Panc1 (cell line): ENCODE measurements at regions of chr7 and their contacts with region 1.

Region 1: DNA sequence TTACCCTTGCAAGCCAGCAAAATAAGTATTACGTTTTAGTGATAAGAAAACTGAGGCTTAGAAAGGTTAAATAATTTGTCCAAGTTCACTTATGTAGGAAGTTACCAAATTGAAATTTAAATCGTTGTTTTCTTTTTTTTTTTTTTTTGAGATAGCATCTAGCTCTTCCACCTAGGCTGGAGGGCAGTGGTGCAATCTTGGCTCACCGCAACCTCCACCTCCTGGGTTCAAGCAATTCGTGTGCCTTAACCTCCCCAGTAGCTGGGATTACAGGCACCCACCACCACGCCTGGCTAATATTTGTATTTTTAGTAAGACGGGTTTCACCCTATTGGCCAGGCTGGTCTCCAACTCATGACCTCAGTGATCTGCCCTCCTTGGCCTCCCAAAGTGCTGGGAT is 158.9 kb upstream of the MKLN1 start:
- DNase-seq: no peak
- ATAC-seq: no peak
- H3K4me3 ChIP-seq: no peak overlapping the region
- H3K27ac ChIP-seq: no peak overlapping the region
- H3K4me1 ChIP-seq: peaks cover 24% of the 10 kb centered on the region
- H3K27me3 ChIP-seq: no peaks in the 10 kb centered on the region
- CTCF ChIP-seq: no peak

Region 2: DNA sequence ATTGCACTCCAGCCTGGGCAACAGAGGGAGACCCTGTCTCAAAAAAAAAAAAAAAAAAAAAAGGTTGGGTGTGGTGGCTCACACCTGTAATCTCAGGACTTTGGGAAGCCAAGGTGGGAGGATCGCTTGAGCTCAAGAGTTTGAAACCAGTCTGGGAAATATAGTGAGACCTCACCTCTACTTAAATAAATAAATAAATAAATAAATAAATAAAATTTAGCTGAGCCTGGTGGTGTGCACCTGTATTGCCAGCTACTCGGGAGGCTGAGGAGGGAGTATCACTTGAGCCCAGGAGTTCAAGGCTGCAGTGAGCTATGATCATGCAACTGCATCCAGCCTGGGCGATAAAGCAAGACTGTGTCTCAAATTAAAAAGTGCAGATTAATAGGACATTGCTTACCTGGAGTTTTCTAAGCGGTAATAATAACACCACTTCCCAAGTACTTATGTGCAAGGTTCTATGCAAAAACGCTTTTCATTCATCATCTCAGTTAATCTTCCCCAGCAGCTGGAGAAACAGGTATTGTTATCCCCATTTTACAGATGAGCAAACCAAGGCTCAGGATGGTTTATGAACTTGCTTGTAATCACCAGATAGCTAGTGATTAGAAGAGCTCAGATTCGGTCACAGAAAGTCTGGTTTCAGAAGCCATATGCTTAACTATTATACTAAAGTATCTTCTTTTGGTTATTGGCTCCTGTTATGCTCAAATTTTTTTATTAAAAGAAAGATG is 37.6 kb before region 1 on chr7:
- CTCF ChIA-PET with region 1: interaction called, 10 read pairs
- POLR2A ChIA-PET with region 1: no interaction called
- in situ Hi-C with region 1: no loop called
- intact Hi-C with region 1: no loop called
- DNase-seq: no peak
- ATAC-seq: no peak
- H3K4me3 ChIP-seq: no peak overlapping the region
- H3K27ac ChIP-seq: no peak overlapping the region
- H3K4me1 ChIP-seq: 0 out of 2 replicates have a peak, but pooled peaks cover 4% of the 10 kb centered on the region
- H3K27me3 ChIP-seq: no peaks in the 10 kb centered on the region
- CTCF ChIP-seq: no peak

Region 3: GRCh38 chr7:131212114-131212513 is 43.4 kb after region 1 on chr7:
- CTCF ChIA-PET with region 1: no interaction called
- POLR2A ChIA-PET with region 1: no interaction called
- in situ Hi-C with region 1: no loop called
- intact Hi-C with region 1: no loop called
- DNase-seq: no peak
- ATAC-seq: no peak
- H3K4me3 ChIP-seq: no peak overlapping the region
- H3K27ac ChIP-seq: no peak overlapping the region
- H3K4me1 ChIP-seq: no peaks in the 10 kb centered on the region
- H3K27me3 ChIP-seq: no peaks in the 10 kb centered on the region
- CTCF ChIP-seq: no peak